ENCODE measurements at regions of chr9 and their contacts with region 1.

Region 1: GRCh38 chr9:129737479-129738274 is 15.2 kb downstream of the PTGES start:
- DNase-seq: peak; percentile 90
- ATAC-seq: peak; percentile 93
- H3K4me3 Mint-ChIP-seq: peak overlapping the region; percentile 67
- H3K27ac Mint-ChIP-seq: peak overlapping the region; percentile 59
- H3K4me1 Mint-ChIP-seq: peaks cover 8% of the 10 kb centered on the region
- H3K27me3 Mint-ChIP-seq: no peaks in the 10 kb centered on the region

Region 2: GRCh38 chr9:129597355-129598088 is 140.2 kb before region 1 on chr9:
- CTCF ChIA-PET with region 1: no interaction called
- DNase-seq: peak; percentile 76
- ATAC-seq: peak; percentile 77
- H3K4me3 Mint-ChIP-seq: peak overlapping the region; percentile 47
- H3K27ac Mint-ChIP-seq: peak overlapping the region; percentile 73
- H3K4me1 Mint-ChIP-seq: peaks cover 31% of the 10 kb centered on the region
- H3K27me3 Mint-ChIP-seq: peaks cover 15% of the 10 kb centered on the region

Region 3: GRCh38 chr9:129641746-129642513 is 95.7 kb before region 1 on chr9 and contains the start of gene ASB6:
- CTCF ChIA-PET with region 1: interaction called, 14 read pairs
- DNase-seq: peak; percentile 95
- ATAC-seq: peak; percentile 94
- H3K4me3 Mint-ChIP-seq: peak within 1 kb of the TSS; percentile 83
- H3K27ac Mint-ChIP-seq: peak within 1 kb of the TSS; percentile 83
- H3K4me1 Mint-ChIP-seq: peaks cover 21% of the 10 kb centered on the region
- H3K27me3 Mint-ChIP-seq: no peaks in the 10 kb centered on the region
- total RNA-seq, gene ASB6: 25.0 to 26.4 TPM

Region 4: DNA sequence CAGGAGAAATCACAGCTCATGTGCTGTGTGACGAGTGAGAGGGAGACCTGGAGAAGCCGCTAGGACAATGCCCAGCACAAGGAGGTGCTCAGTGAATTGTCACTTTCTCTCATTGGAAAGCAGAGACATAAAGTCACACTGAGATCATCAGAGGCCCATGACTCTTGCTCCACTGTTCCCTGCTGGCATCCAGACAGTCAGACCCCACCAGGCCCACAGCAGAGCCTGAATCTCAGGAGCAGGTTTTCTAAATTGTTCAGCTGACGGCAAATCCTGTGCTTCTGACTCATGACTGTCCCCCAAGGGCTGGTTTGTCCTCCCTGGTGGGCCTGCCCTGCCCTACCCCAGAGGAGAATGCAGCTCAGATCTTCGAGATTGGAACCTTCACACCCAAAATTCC is 12.3 kb after region 1 on chr9:
- CTCF ChIA-PET with region 1: interaction called, 25 read pairs
- DNase-seq: no peak
- ATAC-seq: no peak
- H3K4me3 Mint-ChIP-seq: no peak overlapping the region
- H3K27ac Mint-ChIP-seq: no peak overlapping the region
- H3K4me1 Mint-ChIP-seq: peaks cover 3% of the 10 kb centered on the region
- H3K27me3 Mint-ChIP-seq: peaks cover 14% of the 10 kb centered on the region

Region 5: DNA sequence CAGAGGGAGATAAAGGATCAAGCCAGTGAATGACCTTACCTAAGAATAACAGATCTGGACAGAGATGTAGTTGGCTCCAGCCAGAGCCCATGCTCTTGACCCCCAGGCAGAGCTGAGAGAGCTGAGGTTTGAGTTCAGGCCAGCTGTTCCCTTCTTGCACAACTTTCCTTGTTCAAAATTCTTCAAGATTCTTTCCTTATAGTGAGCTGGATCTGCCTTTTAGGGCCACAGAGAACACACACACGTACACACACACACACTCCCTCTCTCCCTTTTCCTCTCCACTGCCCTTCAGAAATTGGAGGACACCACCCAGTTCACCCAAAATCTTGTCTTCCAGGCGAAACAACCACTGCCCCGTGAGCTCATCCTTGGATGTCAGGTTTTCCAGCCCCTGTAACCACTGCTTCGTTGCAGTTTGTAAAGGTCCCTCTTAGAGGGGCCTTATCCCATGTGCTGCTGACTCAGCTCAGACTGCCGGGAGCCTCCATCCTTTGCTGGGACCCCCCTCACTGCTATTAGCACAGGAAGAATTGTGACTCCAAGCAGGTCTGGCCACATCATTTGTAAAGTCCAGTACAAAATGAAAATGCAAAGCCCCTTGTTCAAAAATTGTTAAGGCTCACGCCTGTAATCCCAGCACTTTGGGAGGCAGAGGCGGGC is 25.7 kb after region 1 on chr9:
- CTCF ChIA-PET with region 1: interaction called, 25 read pairs
- DNase-seq: no peak
- ATAC-seq: no peak
- H3K4me3 Mint-ChIP-seq: no peak overlapping the region
- H3K27ac Mint-ChIP-seq: no peak overlapping the region
- H3K4me1 Mint-ChIP-seq: peaks cover 4% of the 10 kb centered on the region
- H3K27me3 Mint-ChIP-seq: peaks cover 11% of the 10 kb centered on the region

Region 6: GRCh38 chr9:129783516-129784361 is 46.1 kb after region 1 on chr9:
- CTCF ChIA-PET with region 1: interaction called, 184 read pairs
- DNase-seq: peak; percentile 81
- ATAC-seq: peak; percentile 97
- H3K4me3 Mint-ChIP-seq: no peak overlapping the region
- H3K27ac Mint-ChIP-seq: no peak overlapping the region
- H3K4me1 Mint-ChIP-seq: peaks cover 4% of the 10 kb centered on the region
- H3K27me3 Mint-ChIP-seq: peaks cover 20% of the 10 kb centered on the region

Region 7: GRCh38 chr9:129900263-129901027 is 162.8 kb after region 1 on chr9:
- CTCF ChIA-PET with region 1: no interaction called
- DNase-seq: no peak
- ATAC-seq: no peak
- H3K4me3 Mint-ChIP-seq: no peak overlapping the region
- H3K27ac Mint-ChIP-seq: peak overlapping the region; percentile 59
- H3K4me1 Mint-ChIP-seq: peaks cover 60% of the 10 kb centered on the region
- H3K27me3 Mint-ChIP-seq: no peaks in the 10 kb centered on the region

Measured in activated CD8-positive, alpha-beta memory T cell treated with anti-CD3 and anti-CD28 coated beads, Interleukin-2, amount 10 ng/mL, durations not matched to agents 7 days and 5 days (primary cell).